ENCODE measurements at regions of chr5 and their contacts with region 1.

Region 1: GRCh38 chr5:131263648-131264450 is at the start of gene CDC42SE2:
- DNase-seq: peak; percentile 66 to 97 (median 80)

Region 2: DNA sequence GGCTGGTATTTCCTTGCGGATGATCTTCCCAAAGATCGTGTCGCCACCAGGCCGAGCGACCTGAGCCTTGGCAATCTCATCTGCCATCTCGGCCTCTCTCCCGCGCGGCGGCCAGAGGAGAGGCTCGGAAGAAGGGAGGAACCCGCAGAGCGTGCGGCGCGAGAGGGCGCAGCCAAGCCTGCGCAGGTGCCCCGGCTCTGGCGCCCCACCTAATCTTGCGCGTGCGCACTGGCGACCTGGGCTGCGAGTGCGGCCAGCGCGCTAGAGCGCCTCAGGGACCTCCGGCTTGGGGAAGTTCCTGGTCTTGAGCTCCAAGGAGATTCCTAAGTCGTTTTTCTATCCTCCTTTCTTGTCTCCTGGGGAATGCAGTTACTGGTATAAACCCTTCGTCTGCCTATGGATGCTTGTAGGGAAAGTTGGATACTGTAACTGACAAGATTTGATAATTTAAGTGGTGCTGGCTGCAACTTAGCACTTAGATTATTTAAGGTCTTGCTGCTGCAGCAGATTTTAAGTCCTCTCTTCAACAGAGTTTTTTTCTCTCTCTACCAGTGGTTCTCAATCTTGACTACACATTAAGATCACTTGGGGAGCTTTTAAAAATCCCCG is 98.6 kb before region 1 on chr5 and contains the start of gene HINT1:
- intact Hi-C with region 1: loop called (anchors 2 kb)
- DNase-seq: peak; percentile 81 to 98 (median 88)

Region 3: DNA sequence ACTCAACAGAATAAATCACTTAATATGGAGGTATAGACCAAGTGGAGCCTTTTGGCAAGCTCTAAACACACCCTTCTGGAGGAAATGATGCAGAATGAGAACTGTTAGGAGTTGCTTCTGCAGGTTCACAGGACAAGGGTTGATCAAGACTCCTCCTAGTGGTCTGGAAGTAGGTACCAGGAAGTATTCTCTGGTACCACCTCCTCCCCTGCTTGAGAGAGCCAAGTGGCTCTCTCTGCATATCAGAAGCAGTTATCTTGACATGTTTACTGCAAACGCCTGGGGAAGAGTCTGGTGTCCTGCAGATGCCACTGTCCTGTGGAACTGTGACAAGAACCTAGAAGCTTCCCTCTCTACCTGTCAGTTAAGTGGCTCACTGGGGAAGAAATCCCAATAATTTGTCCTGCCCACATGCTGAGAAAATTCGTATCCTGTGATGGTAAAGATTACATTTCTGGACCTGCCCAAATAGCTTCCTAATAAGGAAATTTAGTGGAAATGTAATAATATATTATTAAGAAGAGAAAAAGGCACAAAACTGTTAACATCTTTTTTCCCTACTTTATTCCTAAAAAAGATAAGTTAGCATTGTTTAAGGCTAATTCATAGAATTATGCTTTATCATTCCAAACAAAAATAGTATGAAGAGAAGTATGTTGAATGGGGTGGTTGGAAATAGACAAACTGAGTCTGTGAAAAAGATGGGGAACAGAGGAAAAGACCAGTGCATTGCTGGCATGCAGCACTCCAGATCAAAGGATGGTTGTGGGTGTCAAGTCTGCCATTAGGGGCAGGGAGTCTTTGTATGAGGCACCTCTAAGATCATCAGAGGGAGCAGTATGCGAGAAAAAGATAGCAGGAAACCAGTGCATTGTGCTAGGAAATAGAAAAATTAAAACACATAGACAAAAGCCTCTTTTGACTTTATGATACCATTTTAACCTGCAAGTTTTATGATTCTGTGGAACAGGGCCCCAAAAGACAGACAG is 118.9 kb after region 1 on chr5:
- intact Hi-C with region 1: loop called (anchors 10 kb)
- DNase-seq: no peak

Region 4: GRCh38 chr5:131417240-131417869 is 153.5 kb after region 1 on chr5:
- intact Hi-C with region 1: loop called (anchors 2 kb)
- DNase-seq: peak; percentile 54 to 94 (median 84)